ENCODE measurements at regions of chr9 and their contacts with region 1.

Region 1: DNA sequence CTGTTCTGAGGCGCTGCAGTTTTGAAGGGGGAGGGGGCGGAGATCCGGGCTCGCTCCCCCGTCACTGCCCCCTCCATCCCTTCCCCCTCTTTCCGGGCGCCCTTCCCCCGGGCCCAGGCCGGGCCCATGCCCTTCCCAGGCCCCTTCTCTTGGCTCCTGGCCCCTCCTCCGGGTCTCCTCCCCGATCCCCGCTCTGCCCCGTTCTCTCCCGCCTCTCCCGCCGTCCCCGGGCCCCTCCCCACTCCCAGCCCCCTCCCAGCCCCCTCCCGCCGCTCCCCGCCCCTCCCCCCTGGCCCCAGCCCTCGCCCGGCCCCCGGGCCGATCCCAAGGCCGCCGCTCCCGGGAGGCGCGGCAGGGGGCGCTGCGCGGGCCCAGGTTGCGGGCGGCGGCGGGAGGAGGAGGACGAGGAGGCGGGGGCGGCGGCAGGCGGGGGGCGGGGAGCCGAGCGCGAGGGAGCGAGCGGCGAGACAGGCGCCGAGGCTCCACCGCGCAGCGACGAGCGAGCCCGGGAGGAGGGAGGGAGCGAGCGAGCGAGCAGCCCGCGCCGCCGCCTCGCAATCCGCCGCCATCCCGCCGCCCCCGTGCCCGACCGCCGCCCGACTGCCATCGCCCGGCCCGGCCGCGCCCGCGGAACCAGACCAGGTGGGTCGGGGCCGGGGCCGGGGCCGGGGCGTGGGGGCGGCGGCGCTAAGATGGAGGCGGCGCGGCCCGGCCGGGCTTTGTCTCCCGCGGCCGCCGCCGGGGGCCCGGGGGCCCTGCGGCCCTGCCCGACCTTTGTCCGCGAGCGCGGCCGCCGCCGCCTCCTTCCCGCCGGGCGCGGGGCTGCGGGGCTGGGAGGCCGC is at the start of gene PRRC2B:
- DNase-seq: peak; percentile 71 to 90 (median 85)
- ATAC-seq: peak; percentile 75
- H3K4me3 ChIP-seq: peak within 1 kb of the TSS; percentile 69
- H3K4me3 Mint-ChIP-seq: peak within 1 kb of the TSS; percentile 87 to 99 (median 94)
- H3K27ac ChIP-seq: peak within 1 kb of the TSS; percentile 93
- H3K27ac Mint-ChIP-seq: peak within 1 kb of the TSS; percentile 92 to 99 (median 98)
- H3K4me1 ChIP-seq: peaks cover 44 to 45% of the 10 kb centered on the region in 2 donors
- H3K4me1 Mint-ChIP-seq: peaks cover 42 to 50% (median 49%) of the 10 kb centered on the region in 7 donors
- H3K27me3 ChIP-seq: no peaks in the 10 kb centered on the region
- H3K27me3 Mint-ChIP-seq: peaks cover 0 to 18% (median 0%) of the 10 kb centered on the region in 5 donors
- total RNA-seq, gene PRRC2B: 208 to 382 (median 272) TPM

Region 2: GRCh38 chr9:130640681-130641080 is 753.2 kb before region 1 on chr9:
- CTCF ChIA-PET with region 1: no interaction called
- POLR2A ChIA-PET with region 1: no interaction called
- intact Hi-C with region 1: no loop called
- DNase-seq: no peak
- ATAC-seq: no peak
- H3K4me3 ChIP-seq: no peak overlapping the region
- H3K4me3 Mint-ChIP-seq: no peak overlapping the region
- H3K27ac ChIP-seq: no peak overlapping the region
- H3K27ac Mint-ChIP-seq: no peak overlapping the region
- H3K4me1 ChIP-seq: no peaks in the 10 kb centered on the region
- H3K4me1 Mint-ChIP-seq: no peaks in the 10 kb centered on the region
- H3K27me3 ChIP-seq: no peaks in the 10 kb centered on the region
- H3K27me3 Mint-ChIP-seq: no peaks in the 10 kb centered on the region

Region 3: GRCh38 chr9:131270171-131271015 is 123.5 kb before region 1 on chr9:
- CTCF ChIA-PET with region 1: no interaction called
- POLR2A ChIA-PET with region 1: interaction called, 5 read pairs
- intact Hi-C with region 1: loop called (anchors 2 kb)
- DNase-seq: peak in 8 of 9 donors; percentile 49 to 70 (median 64)
- ATAC-seq: peak; percentile 16
- H3K4me3 ChIP-seq: peak overlapping the region; percentile 74
- H3K4me3 Mint-ChIP-seq: peak overlapping the region; percentile 83 to 100 (median 92)
- H3K27ac ChIP-seq: peak overlapping the region; percentile 96
- H3K27ac Mint-ChIP-seq: peak overlapping the region; percentile 95 to 100 (median 99)
- H3K4me1 ChIP-seq: peaks cover 50 to 63% of the 10 kb centered on the region in 2 donors
- H3K4me1 Mint-ChIP-seq: peaks cover 30 to 61% (median 50%) of the 10 kb centered on the region in 7 donors
- H3K27me3 ChIP-seq: no peaks in the 10 kb centered on the region
- H3K27me3 Mint-ChIP-seq: no peaks in the 10 kb centered on the region

Region 4: DNA sequence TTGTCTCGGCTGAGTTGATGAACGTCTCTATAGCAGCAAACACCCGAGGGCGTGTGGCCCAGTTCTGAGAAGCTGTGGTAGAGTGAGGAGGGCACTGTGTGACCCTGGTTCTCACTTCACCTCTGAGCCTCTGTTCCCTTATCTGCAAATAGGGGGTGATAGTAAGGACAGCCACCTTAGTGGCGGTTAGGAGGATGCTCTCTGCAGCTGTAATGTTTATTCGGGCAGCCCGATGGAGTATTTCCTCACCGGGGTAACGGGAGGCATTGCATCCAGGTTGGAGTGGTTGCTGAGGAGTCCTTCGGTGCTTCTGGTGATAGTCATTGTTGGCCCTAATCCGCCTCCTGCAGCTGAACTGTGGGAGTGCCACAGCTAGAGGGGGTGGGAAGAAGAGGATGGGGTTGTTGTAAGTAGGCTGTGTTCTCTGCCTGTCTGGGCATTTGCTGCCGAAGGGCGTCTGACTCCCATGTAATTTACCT is 13.9 kb after region 1 on chr9:
- CTCF ChIA-PET with region 1: interaction called, 14 read pairs
- POLR2A ChIA-PET with region 1: interaction called, 64 read pairs
- intact Hi-C with region 1: loop called (anchors 1 kb)
- DNase-seq: peak in 7 of 9 donors; percentile 48 to 71 (median 60)
- ATAC-seq: peak; percentile 76
- H3K4me3 ChIP-seq: peak overlapping the region; percentile 54
- H3K4me3 Mint-ChIP-seq: peak overlapping the region; percentile 80 to 93 (median 85)
- H3K27ac ChIP-seq: peak overlapping the region; percentile 64
- H3K27ac Mint-ChIP-seq: peak overlapping the region; percentile 81 to 93 (median 86)
- H3K4me1 ChIP-seq: peaks cover 79 to 88% of the 10 kb centered on the region in 2 donors
- H3K4me1 Mint-ChIP-seq: peaks cover 78 to 99% (median 88%) of the 10 kb centered on the region in 7 donors
- H3K27me3 ChIP-seq: no peaks in the 10 kb centered on the region
- H3K27me3 Mint-ChIP-seq: no peaks in the 10 kb centered on the region

Region 5: DNA sequence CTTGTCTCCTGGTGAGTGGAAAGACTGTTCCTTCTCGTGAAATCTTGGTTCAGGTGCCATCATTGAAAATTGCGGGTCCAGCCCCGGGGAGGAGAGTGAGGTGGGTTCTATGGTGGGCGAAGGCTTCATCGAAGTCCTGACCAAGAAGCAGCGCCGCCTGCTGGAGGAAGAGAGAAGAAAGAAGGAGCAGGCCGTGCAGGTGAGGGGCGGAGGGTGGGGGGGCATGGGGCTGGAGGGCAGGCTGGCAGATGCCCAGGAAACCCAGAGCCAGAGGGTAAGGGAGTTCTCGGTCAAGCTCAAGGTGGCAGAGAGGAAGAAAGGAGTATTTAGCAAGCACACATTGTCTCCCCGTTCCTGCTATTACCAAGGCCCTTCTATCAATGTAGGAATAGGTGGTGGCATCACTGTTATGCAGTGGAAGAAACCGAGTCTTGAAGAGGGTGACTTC is 84.6 kb after region 1 on chr9:
- CTCF ChIA-PET with region 1: no interaction called
- POLR2A ChIA-PET with region 1: no interaction called
- intact Hi-C with region 1: loop called (anchors 2 to 5 kb)
- DNase-seq: peak; percentile 19 to 65 (median 51)
- ATAC-seq: peak; percentile 61
- H3K4me3 ChIP-seq: no peak overlapping the region
- H3K4me3 Mint-ChIP-seq: no peak overlapping the region
- H3K27ac ChIP-seq: no peak overlapping the region
- H3K27ac Mint-ChIP-seq: peak overlapping the region in 6 of 9 donors; percentile 11 to 87 (median 64)
- H3K4me1 ChIP-seq: no peaks in the 10 kb centered on the region
- H3K4me1 Mint-ChIP-seq: peaks cover 0 to 8% (median 3%) of the 10 kb centered on the region in 7 donors
- H3K27me3 ChIP-seq: no peaks in the 10 kb centered on the region
- H3K27me3 Mint-ChIP-seq: no peaks in the 10 kb centered on the region

Region 6: GRCh38 chr9:131739980-131740648 is 346.3 kb after region 1 on chr9 and contains the start of gene RAPGEF1:
- CTCF ChIA-PET with region 1: no interaction called
- POLR2A ChIA-PET with region 1: interaction called, 5 read pairs
- intact Hi-C with region 1: loop called in 1 of 2 experiments (anchors 5 kb)
- DNase-seq: peak; percentile 65 to 99 (median 80)
- ATAC-seq: peak; percentile 94
- H3K4me3 ChIP-seq: peak within 1 kb of the TSS; percentile 80
- H3K4me3 Mint-ChIP-seq: peak within 1 kb of the TSS; percentile 80 to 96 (median 92)
- H3K27ac ChIP-seq: peak within 1 kb of the TSS; percentile 68
- H3K27ac Mint-ChIP-seq: peak within 1 kb of the TSS; percentile 80 to 97 (median 92)
- H3K4me1 ChIP-seq: peaks cover 51 to 62% of the 10 kb centered on the region in 2 donors
- H3K4me1 Mint-ChIP-seq: peaks cover 43 to 63% (median 59%) of the 10 kb centered on the region in 7 donors
- H3K27me3 ChIP-seq: no peaks in the 10 kb centered on the region
- H3K27me3 Mint-ChIP-seq: no peaks in the 10 kb centered on the region
- total RNA-seq, gene RAPGEF1: 81.1 to 181 (median 85.8) TPM